Gastrocnemius medialis (tissue), 4 donors: ENCODE measurements at regions of chr2 and their contacts with region 1.

Region 1: DNA sequence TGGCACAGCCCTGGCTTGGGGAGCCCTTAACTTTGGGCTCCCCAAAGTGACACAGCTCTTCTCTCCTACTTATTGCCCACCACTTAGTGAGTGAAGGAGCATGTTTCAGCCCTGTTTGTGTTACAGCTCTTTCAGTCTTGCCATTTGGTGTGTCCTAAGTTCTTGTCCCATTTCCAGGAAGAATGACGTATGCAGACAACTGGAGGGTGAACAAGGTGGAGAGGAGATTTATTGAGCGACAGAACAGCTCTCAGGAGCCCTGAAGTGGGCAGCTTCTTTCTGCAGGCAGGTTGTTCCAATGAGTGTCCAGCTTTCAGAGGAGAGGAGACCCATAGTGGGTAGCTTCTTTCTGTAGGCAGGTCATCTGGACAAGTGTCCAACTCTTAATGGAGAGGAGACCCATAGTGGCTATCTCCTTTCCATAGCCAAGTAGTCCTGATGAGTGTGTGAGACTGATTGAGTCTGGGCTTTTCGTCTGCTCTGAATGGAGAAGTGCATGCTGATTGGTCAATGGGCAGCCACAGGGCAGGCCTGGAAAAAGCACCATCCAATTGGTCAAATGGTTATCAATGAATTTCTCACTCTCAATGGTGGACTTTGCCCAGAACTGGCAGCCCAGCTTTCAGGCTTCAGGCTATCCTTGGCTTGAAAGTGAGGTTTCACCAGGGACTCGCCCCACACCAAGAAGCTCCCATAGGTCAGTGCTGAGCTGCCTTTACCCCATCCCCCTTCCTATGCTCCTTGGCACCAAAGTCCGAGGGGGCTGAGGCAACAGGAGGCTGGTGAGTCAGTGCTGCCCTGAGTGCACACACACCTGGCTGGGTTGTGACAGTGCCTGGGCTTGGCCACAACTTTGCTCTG is 688.2 kb downstream of the NYAP2 start:
- DNase-seq: peak in 1 of 2 donors; percentile 43
- ATAC-seq: peak in 1 of 2 donors; percentile 78
- H3K4me3 ChIP-seq: no peak overlapping the region
- H3K27ac ChIP-seq: peak overlapping the region; percentile 39 to 74 (median 72)
- H3K4me1 ChIP-seq: peaks cover 0 to 4% of the 10 kb centered on the region in 2 donors
- H3K27me3 ChIP-seq: no peaks in the 10 kb centered on the region
- CTCF ChIP-seq: no peak
- POLR2A ChIP-seq: no peak

Region 2: DNA sequence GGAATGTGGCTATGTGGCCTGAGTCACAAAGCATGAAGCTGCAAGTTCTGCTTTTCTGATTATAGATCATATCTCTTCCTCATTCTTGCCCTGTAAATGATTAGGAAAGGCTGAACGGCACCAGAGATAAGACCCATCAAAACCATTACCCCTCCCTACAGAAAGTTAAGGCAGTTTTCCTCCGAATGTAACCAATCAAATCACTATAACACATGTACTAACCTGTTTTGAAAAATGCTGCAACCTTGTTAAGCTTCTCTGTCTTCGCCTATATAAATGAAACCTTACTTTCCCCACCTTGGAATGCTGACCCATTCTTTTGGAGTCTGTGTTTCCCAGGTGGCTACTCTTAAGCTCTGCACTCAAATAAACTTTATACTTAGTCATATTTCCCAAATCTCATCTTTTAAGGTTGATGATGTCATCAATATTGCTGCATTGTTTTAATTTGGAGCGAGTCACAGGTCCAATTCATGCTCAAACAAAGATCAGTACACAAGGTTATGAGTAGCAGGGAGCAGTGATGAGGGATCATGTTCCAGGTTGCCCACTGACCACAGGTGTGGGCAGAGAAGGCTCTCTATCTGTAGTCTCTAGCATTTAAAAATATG is 49.6 kb after region 1 on chr2:
- in situ Hi-C with region 1: no loop called
- intact Hi-C with region 1: loop called (anchors 5 kb)
- DNase-seq: no peak
- ATAC-seq: no peak
- H3K4me3 ChIP-seq: no peak overlapping the region
- H3K27ac ChIP-seq: peak overlapping the region in 1 of 4 donors; percentile 13
- H3K4me1 ChIP-seq: peaks cover 12 to 20% of the 10 kb centered on the region in 2 donors
- H3K27me3 ChIP-seq: no peaks in the 10 kb centered on the region
- CTCF ChIP-seq: no peak
- POLR2A ChIP-seq: no peak